ENCODE measurements at regions of chr14 and their contacts with region 1.

Region 1: GRCh38 chr14:33792720-33793368 is 158.0 kb downstream of the EGLN3 start:
- DNase-seq: peak; percentile 84
- ATAC-seq: peak; percentile 47
- H3K4me3 Mint-ChIP-seq: no peak overlapping the region
- H3K27ac Mint-ChIP-seq: no peak overlapping the region
- H3K4me1 Mint-ChIP-seq: peaks cover 16% of the 10 kb centered on the region
- H3K27me3 Mint-ChIP-seq: peaks cover 26% of the 10 kb centered on the region

Region 2: GRCh38 chr14:32576088-32576795 is 1216.6 kb before region 1 on chr14:
- CTCF ChIA-PET with region 1: interaction called, 19 read pairs
- POLR2A ChIA-PET with region 1: no interaction called
- intact Hi-C with region 1: loop called (anchors 1 kb)
- DNase-seq: peak; percentile 46
- ATAC-seq: no peak
- H3K4me3 Mint-ChIP-seq: no peak overlapping the region
- H3K27ac Mint-ChIP-seq: no peak overlapping the region
- H3K4me1 Mint-ChIP-seq: no peaks in the 10 kb centered on the region
- H3K27me3 Mint-ChIP-seq: peaks cover 12% of the 10 kb centered on the region

Region 3: GRCh38 chr14:32710731-32711680 is 1081.8 kb before region 1 on chr14:
- CTCF ChIA-PET with region 1: interaction called, 3 read pairs
- POLR2A ChIA-PET with region 1: no interaction called
- intact Hi-C with region 1: loop called (anchors 1 to 2 kb)
- DNase-seq: peak; percentile 17
- ATAC-seq: no peak
- H3K4me3 Mint-ChIP-seq: no peak overlapping the region
- H3K27ac Mint-ChIP-seq: no peak overlapping the region
- H3K4me1 Mint-ChIP-seq: peaks cover 2% of the 10 kb centered on the region
- H3K27me3 Mint-ChIP-seq: peaks cover 3% of the 10 kb centered on the region

Region 4: GRCh38 chr14:33676135-33676566 is 116.7 kb before region 1 on chr14:
- CTCF ChIA-PET with region 1: interaction called, 4 read pairs
- POLR2A ChIA-PET with region 1: no interaction called
- intact Hi-C with region 1: loop called in 1 of 2 experiments (anchors 5 kb)
- DNase-seq: peak; percentile 5
- ATAC-seq: no peak
- H3K4me3 Mint-ChIP-seq: no peak overlapping the region
- H3K27ac Mint-ChIP-seq: no peak overlapping the region
- H3K4me1 Mint-ChIP-seq: no peaks in the 10 kb centered on the region
- H3K27me3 Mint-ChIP-seq: peaks cover 4% of the 10 kb centered on the region

Region 5: DNA sequence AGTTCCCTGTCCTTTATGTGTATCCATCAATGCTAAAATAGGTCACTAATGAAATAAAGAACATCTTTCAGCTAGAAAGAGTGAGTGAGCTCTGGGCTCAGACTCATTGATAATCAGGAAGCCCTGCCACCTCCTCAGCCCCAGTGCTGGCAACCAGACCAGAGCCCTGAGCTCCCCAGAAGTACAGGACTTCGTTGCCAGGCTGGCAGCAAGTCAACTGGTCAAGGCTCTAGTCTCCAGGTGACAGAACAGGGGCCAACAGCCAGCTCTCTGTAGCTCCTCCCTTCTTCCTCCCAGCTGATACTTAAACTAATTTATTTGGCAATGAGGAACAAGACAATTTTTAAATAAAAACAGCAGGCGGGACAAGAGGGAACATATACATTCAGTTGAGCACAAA is 12.7 kb after region 1 on chr14:
- CTCF ChIA-PET with region 1: interaction called, 50 read pairs
- POLR2A ChIA-PET with region 1: no interaction called
- intact Hi-C with region 1: no loop called
- DNase-seq: no peak
- ATAC-seq: no peak
- H3K4me3 Mint-ChIP-seq: no peak overlapping the region
- H3K27ac Mint-ChIP-seq: no peak overlapping the region
- H3K4me1 Mint-ChIP-seq: peaks cover 3% of the 10 kb centered on the region
- H3K27me3 Mint-ChIP-seq: peaks cover 16% of the 10 kb centered on the region

Region 6: GRCh38 chr14:34180460-34180868 is 387.6 kb after region 1 on chr14:
- CTCF ChIA-PET with region 1: no interaction called
- POLR2A ChIA-PET with region 1: no interaction called
- intact Hi-C with region 1: no loop called
- DNase-seq: no peak
- ATAC-seq: peak; percentile 39
- H3K4me3 Mint-ChIP-seq: no peak overlapping the region
- H3K27ac Mint-ChIP-seq: no peak overlapping the region
- H3K4me1 Mint-ChIP-seq: peaks cover 2% of the 10 kb centered on the region
- H3K27me3 Mint-ChIP-seq: no peaks in the 10 kb centered on the region

Region 7: GRCh38 chr14:34582117-34582680 is 789.4 kb after region 1 on chr14:
- CTCF ChIA-PET with region 1: no interaction called
- POLR2A ChIA-PET with region 1: no interaction called
- intact Hi-C with region 1: no loop called
- DNase-seq: no peak
- ATAC-seq: no peak
- H3K4me3 Mint-ChIP-seq: no peak overlapping the region
- H3K27ac Mint-ChIP-seq: no peak overlapping the region
- H3K4me1 Mint-ChIP-seq: no peaks in the 10 kb centered on the region
- H3K27me3 Mint-ChIP-seq: no peaks in the 10 kb centered on the region